Sigmoid colon (tissue), 7 donors: ENCODE measurements at regions of chr21 and their contacts with region 1.

Region 1: GRCh38 chr21:38355992-38356797 is 99.4 kb downstream of the KCNJ15 start:
- DNase-seq: peak; percentile 78
- H3K4me3 ChIP-seq: no peak overlapping the region
- H3K27ac ChIP-seq: no peak overlapping the region
- H3K4me1 ChIP-seq: peaks cover 0 to 10% (median 5%) of the 10 kb centered on the region in 4 donors
- H3K27me3 ChIP-seq: peaks cover 0 to 5% (median 0%) of the 10 kb centered on the region in 3 donors
- CTCF ChIP-seq: peak; percentile 50 to 76 (median 71)
- EP300 ChIP-seq: no peak
- POLR2A ChIP-seq: no peak

Region 2: DNA sequence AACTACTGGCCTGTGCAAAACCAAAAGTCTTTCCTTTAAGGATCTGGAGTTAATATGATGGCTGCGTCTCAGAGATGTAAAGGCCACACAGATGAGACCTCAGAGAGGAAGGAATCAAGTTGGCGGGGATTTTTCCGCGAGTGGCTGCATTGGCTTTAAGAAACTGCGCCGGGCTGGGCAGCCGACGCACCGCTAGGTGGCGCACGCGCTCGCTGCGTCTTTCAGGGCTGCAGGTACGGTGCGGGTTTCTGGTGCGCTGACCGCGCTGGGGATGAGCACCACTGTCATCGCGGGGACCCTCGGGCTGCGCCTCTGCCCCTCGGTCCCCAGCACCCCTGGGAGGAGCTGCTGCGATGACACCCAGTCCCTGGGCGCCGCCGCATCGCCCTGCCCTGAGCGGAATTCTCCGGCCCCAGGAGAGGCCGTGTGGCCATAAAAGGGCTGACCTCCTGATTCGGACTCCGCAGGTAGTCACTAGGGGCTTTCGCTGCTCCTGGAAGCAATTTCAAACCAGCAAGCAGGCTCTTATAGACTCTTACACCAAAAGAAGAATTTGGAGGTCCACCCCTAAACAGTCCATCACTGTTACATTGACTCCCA is 680.9 kb before region 1 on chr21:
- intact Hi-C with region 1: loop called (anchors 10 kb)
- DNase-seq: peak; percentile 74
- H3K4me3 ChIP-seq: peak overlapping the region in 1 of 4 donors; percentile 13
- H3K27ac ChIP-seq: no peak overlapping the region
- H3K4me1 ChIP-seq: peaks cover 0 to 9% (median 8%) of the 10 kb centered on the region in 4 donors
- H3K27me3 ChIP-seq: peaks cover 0 to 27% (median 5%) of the 10 kb centered on the region in 3 donors
- CTCF ChIP-seq: peak; percentile 50 to 95 (median 70)
- EP300 ChIP-seq: no peak
- POLR2A ChIP-seq: no peak

Region 3: DNA sequence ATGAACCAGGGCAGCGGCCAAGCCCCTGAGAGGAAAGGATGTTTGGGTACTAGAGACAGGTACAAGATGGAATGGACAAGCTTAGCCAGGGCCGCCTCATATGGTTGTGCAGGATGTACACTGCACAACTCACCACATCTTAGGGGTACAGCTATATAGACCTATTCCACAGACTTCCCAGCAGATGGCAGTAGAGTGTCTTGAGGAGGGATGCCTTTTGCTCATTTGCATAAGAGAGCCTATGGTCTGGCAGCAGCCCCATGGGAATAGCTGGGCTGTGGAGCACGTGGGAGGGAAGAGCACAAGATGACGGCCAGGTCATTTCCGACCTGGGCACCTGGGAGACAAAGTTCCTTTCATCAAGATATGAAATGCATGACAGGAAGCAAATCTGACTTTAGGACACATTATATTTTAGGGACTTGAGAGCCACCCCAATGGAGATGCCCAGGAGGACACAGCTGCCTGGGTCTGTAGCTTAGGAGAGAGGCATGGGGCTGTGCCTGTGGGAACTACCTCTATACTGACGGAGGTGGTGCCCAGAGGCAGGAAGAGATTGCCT is 655.5 kb before region 1 on chr21:
- intact Hi-C with region 1: loop called (anchors 5 kb)
- DNase-seq: no peak
- H3K4me3 ChIP-seq: no peak overlapping the region
- H3K27ac ChIP-seq: no peak overlapping the region
- H3K4me1 ChIP-seq: no peaks in the 10 kb centered on the region
- H3K27me3 ChIP-seq: peaks cover 0 to 5% (median 0%) of the 10 kb centered on the region in 3 donors
- CTCF ChIP-seq: peak in 2 of 4 experiments; percentile 18 to 42
- EP300 ChIP-seq: no peak
- POLR2A ChIP-seq: no peak

Region 4: DNA sequence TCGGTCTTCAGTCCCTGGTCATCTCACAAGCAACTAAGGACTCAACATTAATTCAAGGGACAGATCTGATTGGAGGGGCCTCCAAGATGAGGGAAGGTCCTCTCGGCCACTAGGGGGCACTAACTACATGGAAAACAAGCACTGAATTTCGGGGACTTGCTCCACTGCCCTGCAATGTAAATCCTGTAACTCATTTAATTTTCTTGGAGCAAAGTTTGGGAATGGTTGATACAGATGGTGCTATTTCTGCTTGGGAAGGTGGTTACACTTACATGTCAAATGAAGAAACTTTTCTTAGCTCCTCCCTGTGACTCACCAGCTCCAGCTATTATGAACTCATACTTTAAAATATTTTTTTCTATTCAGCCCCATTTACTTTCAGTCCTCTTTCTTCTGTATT is 196.8 kb before region 1 on chr21:
- intact Hi-C with region 1: loop called (anchors 5 kb)
- DNase-seq: no peak
- H3K4me3 ChIP-seq: no peak overlapping the region
- H3K27ac ChIP-seq: no peak overlapping the region
- H3K4me1 ChIP-seq: no peaks in the 10 kb centered on the region
- H3K27me3 ChIP-seq: peaks cover 0 to under 1% (median 0%) of the 10 kb centered on the region in 3 donors
- CTCF ChIP-seq: peak in 2 of 4 experiments; percentile 29 to 49
- EP300 ChIP-seq: no peak
- POLR2A ChIP-seq: no peak

Region 5: DNA sequence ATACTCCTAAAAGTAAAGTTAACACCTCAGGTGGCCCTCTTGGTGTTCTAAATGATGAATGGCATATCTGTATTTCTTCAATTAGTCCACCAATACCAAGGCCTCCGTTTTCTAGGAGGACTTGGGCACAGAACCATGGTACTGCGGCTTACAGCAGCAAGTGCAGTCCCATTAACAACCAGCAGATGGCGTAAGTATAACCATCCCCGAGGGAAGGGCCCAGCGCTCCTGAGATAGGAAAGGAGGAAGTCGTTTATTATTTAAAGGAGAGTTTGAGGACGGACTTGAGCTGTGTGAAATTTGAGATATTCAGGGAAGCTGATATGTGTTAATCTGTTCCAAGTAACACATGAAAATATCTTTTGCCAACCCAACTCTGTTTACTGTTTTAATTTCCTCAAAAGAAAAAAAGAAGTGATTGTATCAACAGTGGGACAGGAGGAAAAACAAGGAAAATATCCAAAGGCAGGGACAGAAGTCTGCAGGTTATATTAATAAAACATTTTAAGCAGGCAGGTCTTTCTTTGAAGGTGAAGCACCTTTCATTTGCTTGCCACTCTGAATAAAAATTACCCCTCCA is 137.1 kb before region 1 on chr21:
- intact Hi-C with region 1: loop called (anchors 1 kb)
- DNase-seq: peak; percentile 84
- H3K4me3 ChIP-seq: no peak overlapping the region
- H3K27ac ChIP-seq: no peak overlapping the region
- H3K4me1 ChIP-seq: no peaks in the 10 kb centered on the region
- H3K27me3 ChIP-seq: no peaks in the 10 kb centered on the region
- CTCF ChIP-seq: peak; percentile 66 to 87 (median 74)
- EP300 ChIP-seq: no peak
- POLR2A ChIP-seq: no peak